Right ventricle myocardium superior (tissue), 1 donor: ENCODE measurements at regions of chr3 and their contacts with region 1.

Region 1: DNA sequence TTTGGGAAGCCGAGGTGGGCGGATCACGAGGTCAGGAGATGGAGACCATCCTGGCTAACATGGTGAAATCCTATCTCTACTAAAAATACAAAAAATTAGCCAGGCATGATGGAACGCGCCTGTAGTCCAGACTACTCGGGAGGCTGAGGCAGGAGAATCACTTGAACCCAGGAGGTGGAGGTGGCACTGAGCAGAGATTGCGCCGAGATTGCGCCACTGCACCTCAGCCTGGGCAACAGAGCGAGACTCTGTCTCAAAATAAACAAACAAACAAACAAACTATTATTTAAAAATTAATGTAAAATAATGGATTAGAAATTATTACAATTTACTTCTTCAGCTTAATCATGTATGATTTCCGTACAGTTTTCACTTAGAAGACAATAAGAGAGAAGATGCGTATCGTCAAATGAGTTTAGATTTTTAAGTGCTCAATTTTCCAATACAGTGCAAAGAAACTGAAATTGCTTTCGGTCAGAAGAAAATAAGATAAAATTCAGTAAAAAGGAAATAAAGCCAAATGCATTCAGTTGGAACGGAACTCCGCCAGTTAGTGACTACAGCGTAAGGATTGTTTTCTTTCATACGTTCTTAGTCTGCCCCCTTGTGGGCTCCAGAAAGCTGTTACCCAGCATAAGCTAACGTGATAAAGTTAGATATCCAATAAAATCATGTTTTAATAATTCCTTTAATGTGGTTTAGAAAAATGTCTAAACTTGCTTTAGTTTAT is 24.8 kb downstream of the AADAC start:
- DNase-seq: no peak
- ATAC-seq: peak; percentile 89

Region 2: GRCh38 chr3:151439652-151440129 is 399.1 kb before region 1 on chr3:
- intact Hi-C with region 1: loop called (anchors 5 kb)
- DNase-seq: no peak
- ATAC-seq: peak; percentile 84

Region 3: DNA sequence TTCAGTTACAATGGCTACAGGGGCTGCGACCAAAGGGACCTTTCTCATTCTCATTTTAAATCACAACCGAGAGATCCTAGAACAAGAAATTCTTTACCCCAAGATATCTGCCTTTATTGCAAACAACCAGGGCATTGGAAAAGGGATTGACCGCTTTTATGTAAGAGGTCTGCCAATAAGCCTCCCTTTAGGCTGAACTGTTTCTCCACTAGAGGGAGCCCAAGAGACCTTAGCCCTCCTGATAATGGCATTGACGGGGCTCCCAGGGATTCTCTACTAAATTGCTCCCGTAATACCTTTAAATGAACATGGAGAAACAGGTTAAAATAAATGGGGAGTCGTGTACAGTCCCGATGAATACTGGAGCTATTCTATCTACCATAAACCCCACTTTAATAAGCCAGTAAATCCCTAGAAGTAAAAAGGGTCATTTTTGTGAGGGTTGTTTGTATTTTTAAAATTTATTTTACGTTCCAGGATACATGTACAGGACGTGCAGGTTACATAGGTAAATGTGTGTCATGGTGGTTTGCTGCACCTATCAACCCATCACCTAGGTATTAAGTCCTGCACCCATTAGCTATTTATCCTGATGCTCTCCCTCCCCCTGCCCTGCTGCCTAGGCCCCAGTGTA is 370.3 kb before region 1 on chr3:
- intact Hi-C with region 1: loop called (anchors 10 kb)
- DNase-seq: no peak
- ATAC-seq: peak; percentile 79

Region 4: DNA sequence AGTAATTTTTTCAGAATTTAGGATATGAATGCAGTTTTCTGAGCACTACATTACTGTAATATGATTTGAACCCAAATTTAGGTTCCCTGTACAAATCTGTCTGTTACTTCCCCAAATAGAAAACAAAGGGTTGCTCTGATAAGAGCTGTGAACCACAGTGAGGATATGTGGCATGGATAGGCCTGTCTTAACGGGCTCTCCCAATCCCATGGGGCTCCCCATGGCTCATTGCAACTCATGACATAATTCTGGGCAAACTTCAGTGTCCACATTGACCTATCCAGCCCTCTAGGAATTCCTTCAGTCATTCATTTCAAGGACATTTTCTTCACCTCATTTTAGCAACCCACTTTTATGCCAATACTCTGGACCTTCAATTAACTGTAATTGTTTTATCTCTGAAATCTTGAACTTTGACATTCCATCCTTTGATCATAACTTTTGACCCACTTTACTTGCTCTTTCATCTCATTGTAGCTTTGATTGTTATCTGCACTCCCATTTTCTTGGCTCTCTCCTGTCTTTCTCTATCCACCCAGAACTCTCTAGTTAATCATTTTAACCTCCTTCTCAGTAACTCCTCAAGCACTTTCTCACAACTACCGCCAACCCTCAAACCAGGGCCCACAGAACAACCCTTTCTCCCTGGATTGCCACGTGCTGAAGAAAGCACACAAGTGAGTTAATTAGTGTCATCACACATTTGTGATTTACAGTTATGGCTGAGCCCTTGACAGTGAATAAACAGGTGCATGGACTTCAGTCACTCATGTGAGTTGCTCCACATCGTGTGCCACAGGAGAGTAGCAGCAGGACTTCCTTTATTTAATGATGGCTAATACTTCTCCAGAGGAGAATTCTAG is 200.0 kb before region 1 on chr3:
- intact Hi-C with region 1: no loop called
- DNase-seq: no peak
- ATAC-seq: no peak

Region 5: GRCh38 chr3:152060701-152061100 is 222.0 kb after region 1 on chr3:
- intact Hi-C with region 1: no loop called
- DNase-seq: no peak
- ATAC-seq: no peak